AG04449 (cell line): ENCODE measurements at regions of chr10 and their contacts with region 1.

Region 1: DNA sequence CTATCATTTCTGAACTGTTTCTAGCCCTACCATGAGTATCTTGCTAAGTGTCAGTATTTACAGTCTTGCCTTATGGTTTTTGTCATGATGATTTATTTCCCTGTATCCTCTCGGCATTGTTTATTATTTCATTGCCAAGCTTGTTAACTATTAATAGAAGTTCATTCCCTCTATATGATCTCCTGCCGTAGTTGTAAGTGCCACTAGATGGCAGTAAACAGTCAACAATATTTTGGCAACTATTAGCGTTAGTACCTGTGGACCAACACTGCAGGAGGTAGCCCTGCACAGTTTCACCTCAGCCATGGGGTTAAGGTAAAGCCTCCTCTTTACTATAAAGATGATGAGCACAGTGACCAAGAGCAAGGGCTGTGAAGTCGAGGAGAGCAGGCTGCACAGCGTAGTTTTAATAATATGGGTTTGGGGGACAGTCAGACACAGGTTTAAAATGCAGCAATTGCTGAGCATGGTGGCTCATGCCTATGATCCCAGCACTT is 26.1 kb upstream of the CCNJ start:
- DNase-seq: no peak
- H3K4me3 ChIP-seq: no peak overlapping the region
- CTCF ChIP-seq: peak; percentile 65

Region 2: GRCh38 chr10:96287392-96288105 is 270.3 kb after region 1 on chr10:
- CTCF ChIA-PET with region 1: interaction called, 204 read pairs
- POLR2A ChIA-PET with region 1: no interaction called
- DNase-seq: no peak
- H3K4me3 ChIP-seq: no peak overlapping the region
- CTCF ChIP-seq: no peak

Region 3: DNA sequence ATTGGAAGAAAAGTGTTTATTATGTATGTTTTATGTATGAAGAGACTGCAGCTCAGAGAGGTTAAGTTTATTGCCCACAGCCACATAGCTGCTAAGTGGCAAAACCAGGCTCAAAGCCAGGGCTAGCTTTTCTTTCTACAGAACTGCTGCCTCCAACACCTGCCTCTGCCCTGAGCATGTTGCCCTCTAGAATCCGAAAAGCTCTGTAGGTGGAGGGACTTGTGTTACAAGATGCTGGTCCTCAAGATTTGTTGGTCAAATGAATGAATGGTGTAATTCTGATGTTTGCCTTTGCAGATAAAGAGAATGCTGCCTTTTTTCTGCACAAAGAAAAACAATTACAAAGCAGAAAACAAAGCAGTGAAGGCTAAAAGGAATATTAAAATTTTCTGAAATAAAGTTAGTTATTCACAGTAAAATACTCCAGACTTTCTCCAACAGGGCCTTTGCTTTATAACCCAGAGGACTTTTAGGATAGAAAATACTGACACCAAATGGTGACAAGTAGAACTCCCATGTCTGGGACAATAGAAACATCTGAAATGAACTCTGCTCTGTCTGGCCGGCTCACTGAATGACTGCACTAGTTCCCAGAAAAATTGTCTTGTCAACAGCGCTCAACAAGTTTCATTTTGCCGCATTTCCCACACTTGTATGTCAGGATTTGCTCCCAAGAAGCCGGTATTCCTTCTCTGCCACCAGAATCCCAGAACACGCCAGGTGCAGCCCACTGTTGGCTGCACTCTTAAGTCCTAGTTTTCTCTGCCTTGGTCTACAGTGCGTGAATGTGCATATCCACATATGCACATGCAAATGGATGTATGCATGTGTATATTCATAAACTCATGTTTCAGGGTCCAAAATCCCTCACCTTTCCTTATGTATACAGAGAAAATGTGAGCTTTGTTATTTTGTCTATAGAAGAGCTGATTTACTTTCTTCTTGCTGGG is 276.0 kb after region 1 on chr10:
- CTCF ChIA-PET with region 1: interaction called, 204 read pairs
- POLR2A ChIA-PET with region 1: no interaction called
- DNase-seq: peak; percentile 9
- H3K4me3 ChIP-seq: no peak overlapping the region
- CTCF ChIP-seq: peak; percentile 13

Region 4: DNA sequence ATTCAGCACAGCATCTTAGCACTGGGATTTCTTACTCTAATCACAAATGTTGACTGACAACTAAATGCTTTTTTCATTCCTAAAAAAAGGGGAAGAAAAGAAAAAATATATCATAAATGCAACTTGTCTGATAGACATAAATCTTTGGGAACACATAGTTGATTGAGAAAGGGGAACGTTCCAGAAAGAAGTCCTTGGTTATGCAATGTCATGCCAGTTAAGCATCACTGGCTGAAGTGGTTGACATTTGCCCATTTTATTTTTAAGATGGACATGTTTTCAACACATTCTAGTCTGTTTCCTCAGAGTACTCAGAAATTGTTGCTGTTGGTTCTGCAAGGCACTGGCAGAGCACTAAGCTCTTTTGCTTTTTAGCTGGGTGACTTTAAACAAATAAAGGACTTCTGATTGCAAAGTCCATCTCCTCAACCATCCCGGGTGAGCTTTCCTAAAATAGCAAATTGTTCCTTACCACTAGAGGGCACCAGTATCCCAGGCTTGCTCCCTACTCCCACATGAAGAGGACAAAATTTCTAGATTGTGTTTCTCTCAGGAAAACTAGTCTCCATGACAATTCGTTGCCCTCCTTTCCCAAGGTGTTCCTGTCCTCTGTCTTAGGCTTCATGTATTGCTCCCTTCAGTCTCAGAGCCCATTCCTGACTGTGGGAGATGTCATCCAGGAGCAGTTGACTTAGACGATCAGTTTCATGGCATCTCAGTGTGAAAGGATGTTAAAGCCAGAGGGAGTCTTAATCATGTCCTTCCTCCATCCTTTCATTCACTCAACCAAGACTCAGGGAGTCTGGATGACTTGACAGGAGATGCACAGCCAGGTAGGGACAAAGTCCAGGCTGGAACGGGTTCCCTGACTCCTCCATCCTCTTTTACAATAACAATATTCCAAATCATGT is 317.6 kb after region 1 on chr10:
- CTCF ChIA-PET with region 1: interaction called, 27 read pairs
- POLR2A ChIA-PET with region 1: no interaction called
- DNase-seq: no peak
- H3K4me3 ChIP-seq: no peak overlapping the region
- CTCF ChIP-seq: peak; percentile 71

Region 5: GRCh38 chr10:96339957-96340904 is 323.0 kb after region 1 on chr10:
- CTCF ChIA-PET with region 1: interaction called, 27 read pairs
- POLR2A ChIA-PET with region 1: no interaction called
- DNase-seq: peak; percentile 34
- H3K4me3 ChIP-seq: no peak overlapping the region
- CTCF ChIP-seq: peak; percentile 75